ENCODE measurements at regions of chr9 and their contacts with region 1.

Region 1: GRCh38 chr9:3240656-3241268 is 285.0 kb downstream of the RFX3 start:
- DNase-seq: peak; percentile 48 to 73 (median 59)
- ATAC-seq: peak; percentile 69 to 91 (median 86)
- H3K4me3 ChIP-seq: no peak overlapping the region
- H3K27ac ChIP-seq: no peak overlapping the region
- H3K4me1 ChIP-seq: peaks cover 0 to 5% (median 0%) of the 10 kb centered on the region in 12 donors
- H3K27me3 ChIP-seq: no peaks in the 10 kb centered on the region
- CTCF ChIP-seq: peak; percentile 59 to 79 (median 70)
- POLR2A ChIP-seq: no peak

Region 2: GRCh38 chr9:3441197-3441816 is 200.5 kb after region 1 on chr9:
- intact Hi-C with region 1: loop called in 7 of 10 experiments (anchors 5 to 10 kb)
- DNase-seq: peak in 4 of 5 donors; percentile 16 to 40 (median 26)
- ATAC-seq: peak in 3 of 4 donors; percentile 57 to 79 (median 62)
- H3K4me3 ChIP-seq: no peak overlapping the region
- H3K27ac ChIP-seq: no peak overlapping the region
- H3K4me1 ChIP-seq: peaks cover 0 to 8% (median 0%) of the 10 kb centered on the region in 12 donors
- H3K27me3 ChIP-seq: no peaks in the 10 kb centered on the region
- CTCF ChIP-seq: peak; percentile 23 to 61 (median 46)
- POLR2A ChIP-seq: no peak

Region 3: GRCh38 chr9:4375424-4376200 is 1134.8 kb after region 1 on chr9:
- intact Hi-C with region 1: loop called in 1 of 10 experiments (anchors 10 kb)
- DNase-seq: no peak
- ATAC-seq: peak in 3 of 4 donors; percentile 39 to 64 (median 41)
- H3K4me3 ChIP-seq: no peak overlapping the region
- H3K27ac ChIP-seq: no peak overlapping the region
- H3K4me1 ChIP-seq: no peaks in the 10 kb centered on the region
- H3K27me3 ChIP-seq: peaks cover 0 to 22% (median 0%) of the 10 kb centered on the region in 9 donors
- CTCF ChIP-seq: peak; percentile 19 to 66 (median 40)
- POLR2A ChIP-seq: no peak